Right cardiac atrium (tissue), 5 donors: ENCODE measurements at regions of chr12 and their contacts with region 1.

Region 1: DNA sequence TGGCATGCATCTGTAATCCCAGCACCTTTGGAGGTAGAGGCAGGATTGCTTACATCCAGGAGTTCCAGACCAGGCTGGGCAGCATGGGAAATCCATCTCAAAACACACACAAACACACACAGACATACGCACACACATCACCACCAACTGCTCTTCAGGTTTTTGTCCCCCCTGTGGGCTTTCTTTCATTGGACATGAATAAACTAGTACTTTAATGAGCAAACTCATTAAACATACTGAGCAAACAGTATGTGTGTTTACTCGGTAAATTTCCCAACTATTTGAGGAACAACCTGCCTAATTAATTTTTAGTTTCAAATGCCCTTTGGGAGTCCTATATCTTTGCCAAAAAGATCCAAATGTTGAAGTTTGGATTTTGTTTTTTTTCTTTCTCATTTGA is 10.1 kb upstream of the RASSF3 start:
- DNase-seq: no peak
- ATAC-seq: no peak
- H3K4me3 ChIP-seq: no peak overlapping the region
- H3K27ac ChIP-seq: no peak overlapping the region
- H3K4me1 ChIP-seq: no peaks in the 10 kb centered on the region
- H3K27me3 ChIP-seq: no peaks in the 10 kb centered on the region

Region 2: DNA sequence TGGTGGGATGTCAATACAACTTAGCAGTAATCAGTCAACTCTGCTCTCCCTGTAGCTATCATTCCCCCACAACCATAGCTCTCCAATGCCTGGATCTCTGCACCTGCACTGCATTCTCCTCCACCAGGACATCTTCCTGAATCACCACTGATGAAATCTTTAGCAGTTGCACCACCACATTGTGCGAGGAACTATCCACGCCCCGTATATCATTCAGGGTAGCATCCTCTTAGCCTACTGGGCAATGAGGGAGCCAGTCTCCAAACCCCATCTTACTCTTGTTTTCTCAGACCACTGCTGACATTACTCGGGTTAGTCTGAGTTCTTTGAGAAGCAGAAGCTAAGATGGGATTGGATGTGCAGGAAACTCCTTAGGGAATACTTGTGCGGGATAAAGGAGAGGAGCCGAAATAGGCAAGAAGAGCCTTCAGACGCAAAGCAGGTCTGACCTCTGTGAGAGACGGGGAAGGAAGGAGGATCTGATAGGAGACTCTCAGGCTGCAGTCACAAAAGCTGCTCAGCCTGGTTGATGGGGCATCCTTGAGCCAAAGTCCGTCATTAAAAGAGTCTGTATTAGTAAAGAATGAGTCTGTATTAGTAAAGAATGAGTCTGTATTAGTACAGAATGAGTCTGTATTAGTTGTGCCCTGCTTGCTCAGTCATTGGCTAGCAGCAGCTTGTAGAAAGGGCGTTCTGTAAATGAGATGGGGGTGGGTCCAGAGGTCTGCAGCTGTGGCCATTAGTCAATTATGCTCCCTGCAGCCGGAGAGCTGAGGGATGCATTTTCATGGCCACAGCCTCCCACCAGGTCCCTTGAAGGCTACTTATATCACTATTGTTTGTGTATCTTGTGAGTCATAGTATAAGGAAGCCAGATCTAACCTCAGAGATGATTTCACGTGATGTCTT is 39.5 kb before region 1 on chr12:
- intact Hi-C with region 1: loop called in 3 of 4 experiments (anchors 5 to 10 kb)
- DNase-seq: no peak
- ATAC-seq: peak; percentile 21 to 24
- H3K4me3 ChIP-seq: no peak overlapping the region
- H3K27ac ChIP-seq: no peak overlapping the region
- H3K4me1 ChIP-seq: no peaks in the 10 kb centered on the region
- H3K27me3 ChIP-seq: no peaks in the 10 kb centered on the region